ENCODE measurements at regions of chr20 and their contacts with region 1.

Region 1: DNA sequence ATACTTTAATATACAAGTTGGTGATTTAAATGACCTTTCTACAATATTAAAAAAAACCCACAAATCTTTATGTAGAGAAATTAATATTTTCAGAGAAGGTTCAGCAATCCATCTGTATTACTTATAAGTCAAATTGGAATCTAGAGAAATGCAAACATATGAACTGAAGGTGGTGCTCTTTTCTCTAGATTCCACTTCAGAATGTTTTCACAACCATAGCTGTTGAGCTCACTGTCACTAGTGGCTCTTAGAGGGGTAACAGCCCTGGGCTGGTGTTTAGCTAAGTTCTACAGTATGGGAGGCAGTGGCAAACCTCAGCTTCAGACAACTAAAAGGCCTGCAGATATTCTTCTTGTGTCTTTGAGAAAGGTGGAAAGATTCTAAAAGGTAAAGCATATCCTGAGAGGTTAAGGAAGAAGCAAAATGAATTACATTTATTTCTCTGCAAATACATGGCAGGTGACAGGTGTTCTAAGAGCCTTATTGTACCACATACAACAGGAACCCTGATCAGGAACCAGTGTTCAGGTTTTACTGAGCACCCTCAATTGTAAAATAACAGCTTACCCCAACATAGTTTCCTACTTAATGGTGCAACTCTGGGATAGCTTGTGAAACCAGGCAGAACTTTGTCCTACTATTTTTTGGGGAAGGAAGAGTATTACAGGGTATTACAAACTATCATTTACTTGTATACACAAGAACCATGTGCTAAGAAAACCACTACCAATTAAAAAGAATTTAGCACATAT is 56.6 kb upstream of the SAMHD1 start:
- DNase-seq: peak in 7 of 9 donors; percentile 60 to 80 (median 64)
- ATAC-seq: peak; percentile 93
- H3K4me3 ChIP-seq: no peak overlapping the region
- H3K4me3 Mint-ChIP-seq: peak overlapping the region in 6 of 10 donors; percentile 29 to 72 (median 48)
- H3K27ac ChIP-seq: peak overlapping the region; percentile 59
- H3K27ac Mint-ChIP-seq: peak overlapping the region; percentile 73 to 97 (median 89)
- H3K4me1 ChIP-seq: peaks cover 6 to 7% of the 10 kb centered on the region in 2 donors
- H3K4me1 Mint-ChIP-seq: peaks cover 14 to 39% (median 35%) of the 10 kb centered on the region in 7 donors
- H3K27me3 ChIP-seq: no peaks in the 10 kb centered on the region
- H3K27me3 Mint-ChIP-seq: no peaks in the 10 kb centered on the region

Region 2: GRCh38 chr20:36808317-36809257 is 199.5 kb before region 1 on chr20:
- CTCF ChIA-PET with region 1: no interaction called
- POLR2A ChIA-PET with region 1: no interaction called
- intact Hi-C with region 1: no loop called
- DNase-seq: peak; percentile 14 to 75 (median 51)
- ATAC-seq: peak; percentile 92
- H3K4me3 ChIP-seq: no peak overlapping the region
- H3K4me3 Mint-ChIP-seq: no peak overlapping the region
- H3K27ac ChIP-seq: no peak overlapping the region
- H3K27ac Mint-ChIP-seq: no peak overlapping the region
- H3K4me1 ChIP-seq: no peaks in the 10 kb centered on the region
- H3K4me1 Mint-ChIP-seq: peaks cover 0 to 3% (median 0%) of the 10 kb centered on the region in 7 donors
- H3K27me3 ChIP-seq: no peaks in the 10 kb centered on the region
- H3K27me3 Mint-ChIP-seq: no peaks in the 10 kb centered on the region

Region 3: GRCh38 chr20:36881888-36882287 is 126.2 kb before region 1 on chr20:
- CTCF ChIA-PET with region 1: no interaction called
- POLR2A ChIA-PET with region 1: no interaction called
- intact Hi-C with region 1: no loop called
- DNase-seq: no peak
- ATAC-seq: no peak
- H3K4me3 ChIP-seq: no peak overlapping the region
- H3K4me3 Mint-ChIP-seq: no peak overlapping the region
- H3K27ac ChIP-seq: no peak overlapping the region
- H3K27ac Mint-ChIP-seq: no peak overlapping the region
- H3K4me1 ChIP-seq: peaks cover 2 to 4% of the 10 kb centered on the region in 2 donors
- H3K4me1 Mint-ChIP-seq: peaks cover 4 to 14% (median 9%) of the 10 kb centered on the region in 7 donors
- H3K27me3 ChIP-seq: no peaks in the 10 kb centered on the region
- H3K27me3 Mint-ChIP-seq: no peaks in the 10 kb centered on the region

Region 4: GRCh38 chr20:36975099-36975818 is 32.8 kb before region 1 on chr20:
- CTCF ChIA-PET with region 1: interaction called, 10 read pairs
- POLR2A ChIA-PET with region 1: interaction called, 12 read pairs
- intact Hi-C with region 1: no loop called
- DNase-seq: peak in 8 of 9 donors; percentile 49 to 92 (median 88)
- ATAC-seq: peak; percentile 96
- H3K4me3 ChIP-seq: peak overlapping the region; percentile 8
- H3K4me3 Mint-ChIP-seq: peak overlapping the region; percentile 35 to 87 (median 70)
- H3K27ac ChIP-seq: peak overlapping the region; percentile 69
- H3K27ac Mint-ChIP-seq: peak overlapping the region; percentile 72 to 99 (median 91)
- H3K4me1 ChIP-seq: peaks cover 29 to 40% of the 10 kb centered on the region in 2 donors
- H3K4me1 Mint-ChIP-seq: peaks cover 16 to 53% (median 41%) of the 10 kb centered on the region in 7 donors
- H3K27me3 ChIP-seq: no peaks in the 10 kb centered on the region
- H3K27me3 Mint-ChIP-seq: no peaks in the 10 kb centered on the region

Region 5: GRCh38 chr20:37042986-37043972 is 35.2 kb after region 1 on chr20:
- CTCF ChIA-PET with region 1: interaction called, 7 read pairs
- POLR2A ChIA-PET with region 1: interaction called, 14 read pairs
- intact Hi-C with region 1: loop called in 1 of 2 experiments (anchors 1 kb)
- DNase-seq: peak in 8 of 9 donors; percentile 13 to 48 (median 38)
- ATAC-seq: peak; percentile 76
- H3K4me3 ChIP-seq: peak overlapping the region; percentile 67
- H3K4me3 Mint-ChIP-seq: peak overlapping the region; percentile 81 to 97 (median 87)
- H3K27ac ChIP-seq: peak overlapping the region; percentile 59
- H3K27ac Mint-ChIP-seq: peak overlapping the region; percentile 78 to 99 (median 93)
- H3K4me1 ChIP-seq: peaks cover 14 to 17% of the 10 kb centered on the region in 2 donors
- H3K4me1 Mint-ChIP-seq: peaks cover 6 to 38% (median 32%) of the 10 kb centered on the region in 7 donors
- H3K27me3 ChIP-seq: no peaks in the 10 kb centered on the region
- H3K27me3 Mint-ChIP-seq: no peaks in the 10 kb centered on the region

Region 6: DNA sequence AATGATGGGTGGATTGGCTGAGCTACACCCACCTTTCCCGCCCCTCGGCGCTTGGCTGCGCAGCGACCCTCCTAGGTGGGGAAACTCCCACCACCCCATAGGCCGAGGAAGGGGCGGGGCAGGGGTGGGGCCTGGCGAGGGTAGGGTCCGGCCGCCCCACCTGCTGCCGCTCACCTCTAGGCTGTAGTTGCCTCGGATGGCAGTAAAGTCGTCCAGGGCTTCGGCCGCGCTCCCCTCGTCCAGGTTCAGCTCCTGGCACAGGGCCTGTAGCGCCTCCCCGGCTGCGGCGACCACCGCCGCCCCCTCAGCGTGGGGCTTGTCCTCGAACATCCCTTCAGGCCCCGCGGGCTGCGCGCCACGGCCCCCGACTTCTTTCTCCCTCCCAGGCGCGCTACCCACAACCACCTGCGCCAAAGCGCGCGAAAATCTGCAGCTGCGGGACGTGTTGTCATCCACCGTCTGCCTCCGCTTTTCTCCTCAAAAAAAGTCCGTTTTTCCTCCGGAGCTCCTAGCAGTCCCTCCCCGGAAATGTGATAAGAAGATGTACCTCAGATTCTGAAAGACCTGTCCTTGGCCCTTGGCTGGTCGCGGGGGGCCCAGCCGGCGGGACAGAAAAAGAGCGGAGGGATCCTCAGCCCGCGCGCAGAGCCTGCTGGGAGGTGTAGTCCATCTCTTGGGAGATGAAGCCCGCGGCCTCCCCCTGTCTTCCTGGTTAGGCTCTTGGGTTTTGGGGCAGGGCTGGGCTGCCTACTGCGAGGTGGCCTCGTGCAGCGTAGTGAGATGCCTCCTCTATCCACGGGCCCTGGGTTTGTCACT is 87.7 kb after region 1 on chr20 and contains the start of gene RBL1:
- CTCF ChIA-PET with region 1: interaction called, 11 read pairs
- POLR2A ChIA-PET with region 1: interaction called, 13 read pairs
- intact Hi-C with region 1: loop called in 1 of 2 experiments (anchors 1 kb)
- DNase-seq: peak; percentile 72 to 93 (median 91)
- ATAC-seq: peak; percentile 91
- H3K4me3 ChIP-seq: peak within 1 kb of the TSS; percentile 93
- H3K4me3 Mint-ChIP-seq: peak within 1 kb of the TSS; percentile 88 to 100 (median 98)
- H3K27ac ChIP-seq: peak within 1 kb of the TSS; percentile 91
- H3K27ac Mint-ChIP-seq: peak within 1 kb of the TSS; percentile 96 to 100 (median 100)
- H3K4me1 ChIP-seq: peaks cover 17 to 18% of the 10 kb centered on the region in 2 donors
- H3K4me1 Mint-ChIP-seq: peaks cover 15 to 42% (median 34%) of the 10 kb centered on the region in 7 donors
- H3K27me3 ChIP-seq: no peaks in the 10 kb centered on the region
- H3K27me3 Mint-ChIP-seq: peaks cover 0 to 6% (median 0%) of the 10 kb centered on the region in 5 donors
- total RNA-seq, gene RBL1: 27.4 to 51.2 (median 30.6) TPM

Region 7: DNA sequence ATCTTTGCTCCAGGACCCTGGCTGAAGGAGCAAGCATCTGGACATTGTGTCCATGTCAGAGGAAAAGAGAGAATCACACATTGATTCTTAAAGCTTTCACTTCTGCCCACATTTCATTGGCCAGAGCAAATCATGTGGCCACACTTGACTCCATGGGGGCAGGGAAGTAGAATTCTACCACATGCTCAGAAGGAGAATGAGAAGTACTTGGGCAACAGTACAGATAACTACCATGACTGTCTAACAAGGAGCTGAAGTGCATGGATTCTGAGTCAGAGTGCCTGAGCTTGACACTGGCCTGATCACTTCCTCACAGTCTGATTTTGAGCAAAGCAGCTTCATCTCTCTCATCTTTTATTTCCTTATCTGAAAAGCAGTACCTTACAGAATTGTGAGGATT is 215.0 kb after region 1 on chr20:
- CTCF ChIA-PET with region 1: no interaction called
- POLR2A ChIA-PET with region 1: no interaction called
- intact Hi-C with region 1: no loop called
- DNase-seq: no peak
- ATAC-seq: peak; percentile 98
- H3K4me3 ChIP-seq: no peak overlapping the region
- H3K4me3 Mint-ChIP-seq: no peak overlapping the region
- H3K27ac ChIP-seq: no peak overlapping the region
- H3K27ac Mint-ChIP-seq: no peak overlapping the region
- H3K4me1 ChIP-seq: no peaks in the 10 kb centered on the region
- H3K4me1 Mint-ChIP-seq: peaks cover 0 to 10% (median 5%) of the 10 kb centered on the region in 7 donors
- H3K27me3 ChIP-seq: no peaks in the 10 kb centered on the region
- H3K27me3 Mint-ChIP-seq: no peaks in the 10 kb centered on the region

Region 8: DNA sequence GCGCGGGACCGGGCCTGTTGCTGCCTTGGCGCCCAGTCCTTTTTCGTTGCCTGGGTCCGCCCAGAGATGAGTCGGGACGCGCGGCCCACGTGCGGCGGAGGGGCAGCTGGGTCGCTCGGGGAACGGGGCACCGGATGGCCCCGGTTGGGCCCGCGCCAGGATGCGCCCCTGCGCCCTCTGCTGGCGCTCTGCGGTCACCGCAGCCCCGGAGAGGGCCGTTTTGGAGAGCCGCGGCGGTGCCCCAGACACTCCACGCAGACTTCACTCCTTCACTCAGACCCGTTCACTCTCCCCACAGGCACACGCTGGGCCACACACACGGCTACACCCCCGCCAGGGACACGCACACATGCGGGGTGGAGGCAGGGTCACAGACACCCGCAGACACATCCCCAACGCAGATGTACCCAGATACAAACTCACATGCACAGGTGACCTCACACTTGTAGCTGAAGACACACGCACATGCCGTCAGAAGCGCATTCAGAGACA is 376.7 kb after region 1 on chr20:
- CTCF ChIA-PET with region 1: no interaction called
- POLR2A ChIA-PET with region 1: no interaction called
- intact Hi-C with region 1: loop called in 1 of 2 experiments (anchors 10 kb)
- DNase-seq: peak; percentile 55 to 89 (median 77)
- ATAC-seq: peak; percentile 96
- H3K4me3 ChIP-seq: peak overlapping the region; percentile 28
- H3K4me3 Mint-ChIP-seq: peak overlapping the region; percentile 75 to 94 (median 84)
- H3K27ac ChIP-seq: peak overlapping the region; percentile 8
- H3K27ac Mint-ChIP-seq: peak overlapping the region in 6 of 9 donors; percentile 8 to 85 (median 56)
- H3K4me1 ChIP-seq: peaks cover 4 to 5% of the 10 kb centered on the region in 2 donors
- H3K4me1 Mint-ChIP-seq: peaks cover 4 to 13% (median 6%) of the 10 kb centered on the region in 7 donors
- H3K27me3 ChIP-seq: no peaks in the 10 kb centered on the region
- H3K27me3 Mint-ChIP-seq: peaks cover 0 to 7% (median 0%) of the 10 kb centered on the region in 5 donors

Region 9: DNA sequence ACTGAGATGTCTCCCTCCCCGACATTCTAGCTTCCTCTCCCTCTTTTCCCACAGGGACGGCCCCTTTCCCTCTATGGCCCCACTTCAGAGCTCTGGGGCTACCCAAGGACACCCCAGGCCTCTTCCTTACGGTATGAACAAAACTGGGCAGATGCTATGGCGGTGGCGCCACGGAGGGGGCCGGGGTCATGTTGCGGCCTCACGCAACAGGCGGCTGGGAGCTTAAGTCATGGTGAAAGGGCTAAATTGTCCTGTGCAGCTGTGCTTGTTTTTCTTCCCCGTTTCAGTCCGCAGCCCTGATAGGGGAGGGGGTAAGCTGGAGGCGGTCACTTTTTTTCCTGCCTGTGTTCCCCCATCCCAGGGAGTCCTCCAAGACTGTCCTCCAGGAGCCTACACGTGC is 1270.1 kb after region 1 on chr20:
- CTCF ChIA-PET with region 1: no interaction called
- POLR2A ChIA-PET with region 1: no interaction called
- intact Hi-C with region 1: no loop called
- DNase-seq: no peak
- ATAC-seq: no peak
- H3K4me3 ChIP-seq: no peak overlapping the region
- H3K4me3 Mint-ChIP-seq: no peak overlapping the region
- H3K27ac ChIP-seq: no peak overlapping the region
- H3K27ac Mint-ChIP-seq: no peak overlapping the region
- H3K4me1 ChIP-seq: no peaks in the 10 kb centered on the region
- H3K4me1 Mint-ChIP-seq: peaks cover 0 to 2% (median 0%) of the 10 kb centered on the region in 7 donors
- H3K27me3 ChIP-seq: no peaks in the 10 kb centered on the region
- H3K27me3 Mint-ChIP-seq: peaks cover 0 to 6% (median 0%) of the 10 kb centered on the region in 5 donors